H1 (cell line): ENCODE measurements at regions of chr1 and their contacts with region 1.

Region 1: GRCh38 chr1:164673584-164674214 is 114.7 kb downstream of the PBX1 start:
- DNase-seq: peak; percentile 25 to 84
- H3K4me3 ChIP-seq: no peak overlapping the region
- H3K27ac ChIP-seq: no peak overlapping the region
- H3K4me1 ChIP-seq: peaks cover 5 to 20% (median 15%) of the 10 kb centered on the region in 4 experiments; a peak in 5 of 7 replicates
- H3K27me3 ChIP-seq: no peaks in the 10 kb centered on the region
- CTCF ChIP-seq: peak; percentile 74 to 92 (median 91)
- EP300 ChIP-seq: no peak
- POLR2A ChIP-seq: no peak; a peak in 1 of 3 replicates
- RAD21 ChIP-seq: peak; percentile 56 to 65

Region 2: GRCh38 chr1:164625001-164625617 is 48.6 kb before region 1 on chr1:
- CTCF ChIA-PET with region 1: interaction called, 18 read pairs
- POLR2A ChIA-PET with region 1: interaction called, 3 read pairs
- DNase-seq: no peak
- H3K4me3 ChIP-seq: no peak overlapping the region
- H3K27ac ChIP-seq: no peak overlapping the region
- H3K4me1 ChIP-seq: peaks cover 0 to 16% (median 10%) of the 10 kb centered on the region in 4 experiments; a peak in 4 of 7 replicates
- H3K27me3 ChIP-seq: no peaks in the 10 kb centered on the region
- CTCF ChIP-seq: peak in 1 of 3 experiments; percentile 39; a peak in 1 of 4 replicates
- EP300 ChIP-seq: no peak
- POLR2A ChIP-seq: no peak
- RAD21 ChIP-seq: 0 out of 4 replicates have a peak, but pooled peaks of 1 of the 2 experiments have one; percentile 6

Region 3: GRCh38 chr1:164660412-164660772 is 13.3 kb before region 1 on chr1:
- CTCF ChIA-PET with region 1: interaction called, 16 read pairs
- POLR2A ChIA-PET with region 1: interaction called, 3 read pairs
- DNase-seq: no peak
- H3K4me3 ChIP-seq: no peak overlapping the region
- H3K27ac ChIP-seq: no peak overlapping the region
- H3K4me1 ChIP-seq: peaks cover 6 to 17% (median 16%) of the 10 kb centered on the region in 4 experiments; a peak in 6 of 7 replicates
- H3K27me3 ChIP-seq: no peaks in the 10 kb centered on the region
- CTCF ChIP-seq: no peak
- EP300 ChIP-seq: no peak
- POLR2A ChIP-seq: no peak; a peak in 1 of 3 replicates
- RAD21 ChIP-seq: no peak

Region 4: DNA sequence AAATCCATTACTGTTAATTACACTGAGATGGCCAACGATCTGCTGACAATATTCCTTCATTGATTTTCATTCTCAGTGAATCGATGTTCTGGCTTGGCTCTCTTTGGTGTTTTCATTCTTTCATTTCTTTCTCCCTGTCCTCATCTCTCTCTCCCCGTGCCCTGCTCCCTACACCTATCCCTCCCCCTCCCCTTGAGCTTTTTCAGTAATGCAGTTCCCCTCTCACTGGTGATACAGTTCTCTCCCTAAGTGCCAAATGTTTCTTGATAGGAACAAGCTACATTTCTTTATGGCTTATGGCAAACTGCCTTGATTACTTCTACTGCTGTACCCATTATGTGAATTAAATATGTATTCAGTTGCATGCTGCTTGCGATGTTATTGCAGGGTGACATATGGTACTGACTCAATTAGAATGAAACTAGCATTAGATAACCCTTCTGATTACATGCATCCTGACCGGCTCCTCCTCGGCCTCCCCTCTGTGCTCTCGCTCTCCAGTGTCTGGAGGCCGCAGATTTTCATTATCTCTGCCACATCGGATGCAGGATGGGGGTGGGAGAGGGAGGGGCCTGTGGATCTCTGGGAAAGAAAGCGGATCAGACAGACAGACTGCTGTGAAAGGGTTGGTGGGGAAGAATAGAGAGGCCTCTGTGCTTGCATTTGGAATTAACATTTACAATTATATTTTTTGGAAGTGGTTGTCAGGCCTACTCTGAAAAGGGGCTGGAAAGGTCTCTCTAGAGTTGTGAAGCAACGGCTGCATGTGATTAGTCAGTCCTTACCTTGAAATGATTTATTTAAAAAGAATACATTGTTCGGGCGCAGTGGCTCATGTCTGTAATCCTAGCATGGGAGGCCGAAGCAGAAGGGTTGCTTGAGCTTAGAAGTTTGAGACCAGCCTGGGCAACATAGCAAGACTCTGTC is 16.2 kb after region 1 on chr1:
- CTCF ChIA-PET with region 1: interaction called, 37 read pairs
- POLR2A ChIA-PET with region 1: no interaction called
- DNase-seq: no peak
- H3K4me3 ChIP-seq: 0 out of 8 replicates have a peak overlapping the region, but pooled peaks of 1 of the 4 experiments have one; percentile 2
- H3K27ac ChIP-seq: 0 out of 2 replicates have a peak overlapping the region, but pooled peaks have one; percentile 22
- H3K4me1 ChIP-seq: peaks cover 0 to 7% (median 2%) of the 10 kb centered on the region in 4 experiments; a peak in 4 of 7 replicates
- H3K27me3 ChIP-seq: no peaks in the 10 kb centered on the region
- CTCF ChIP-seq: no peak
- EP300 ChIP-seq: no peak
- POLR2A ChIP-seq: no peak
- RAD21 ChIP-seq: no peak

Region 5: DNA sequence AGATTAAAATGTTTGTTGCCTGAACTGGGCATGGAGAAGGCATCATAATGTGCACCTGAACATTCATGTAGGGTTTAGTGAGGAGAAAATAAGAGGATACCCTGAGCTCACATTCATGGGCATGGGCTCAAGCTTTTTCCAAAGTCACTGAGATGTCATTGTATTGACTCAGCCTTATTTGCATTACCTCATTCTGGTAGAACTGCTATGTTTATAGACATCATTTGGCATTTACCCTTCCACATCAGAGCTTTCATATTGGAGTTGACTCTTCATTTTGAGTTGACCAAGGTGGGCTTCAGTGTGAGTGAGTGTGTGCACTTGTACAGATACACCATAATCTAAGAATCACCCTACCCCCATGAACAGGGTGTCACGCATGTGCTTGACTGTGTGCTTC is 28.5 kb after region 1 on chr1:
- CTCF ChIA-PET with region 1: interaction called, 30 read pairs
- POLR2A ChIA-PET with region 1: no interaction called
- DNase-seq: no peak
- H3K4me3 ChIP-seq: no peak overlapping the region
- H3K27ac ChIP-seq: no peak overlapping the region
- H3K4me1 ChIP-seq: peaks cover 0 to 14% (median 11%) of the 10 kb centered on the region in 4 experiments; a peak in 5 of 7 replicates
- H3K27me3 ChIP-seq: no peaks in the 10 kb centered on the region
- CTCF ChIP-seq: no peak
- EP300 ChIP-seq: no peak
- POLR2A ChIP-seq: no peak
- RAD21 ChIP-seq: no peak

Region 6: DNA sequence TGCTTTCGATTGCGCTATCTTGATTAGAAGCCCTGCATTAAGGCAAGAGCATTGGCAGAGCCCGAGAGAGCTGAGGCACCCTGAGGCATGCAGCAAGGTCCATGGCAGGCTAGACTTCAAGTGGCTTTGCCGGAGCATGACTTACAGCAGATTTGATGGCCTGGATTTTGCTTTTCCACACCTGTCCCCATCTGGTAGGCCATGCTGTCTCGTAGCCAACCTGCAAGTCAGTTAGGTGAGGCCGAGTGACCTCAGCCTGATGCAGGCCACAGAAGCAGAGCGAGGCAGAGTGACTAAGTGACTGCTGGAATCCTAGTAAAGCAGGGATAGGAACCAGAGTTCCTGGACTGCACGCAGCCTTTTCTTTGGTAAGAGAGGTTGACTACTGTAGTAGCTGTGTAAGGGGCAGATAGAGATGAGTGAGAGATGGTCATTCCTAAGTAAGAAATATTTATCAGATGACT is 34.2 kb after region 1 on chr1:
- CTCF ChIA-PET with region 1: interaction called, 30 read pairs
- POLR2A ChIA-PET with region 1: interaction called, 3 read pairs
- DNase-seq: no peak
- H3K4me3 ChIP-seq: no peak overlapping the region
- H3K27ac ChIP-seq: peak overlapping the region; percentile 21
- H3K4me1 ChIP-seq: peaks cover 11 to 27% (median 23%) of the 10 kb centered on the region in 4 experiments
- H3K27me3 ChIP-seq: no peaks in the 10 kb centered on the region
- CTCF ChIP-seq: no peak
- EP300 ChIP-seq: no peak
- POLR2A ChIP-seq: no peak
- RAD21 ChIP-seq: no peak

Region 7: DNA sequence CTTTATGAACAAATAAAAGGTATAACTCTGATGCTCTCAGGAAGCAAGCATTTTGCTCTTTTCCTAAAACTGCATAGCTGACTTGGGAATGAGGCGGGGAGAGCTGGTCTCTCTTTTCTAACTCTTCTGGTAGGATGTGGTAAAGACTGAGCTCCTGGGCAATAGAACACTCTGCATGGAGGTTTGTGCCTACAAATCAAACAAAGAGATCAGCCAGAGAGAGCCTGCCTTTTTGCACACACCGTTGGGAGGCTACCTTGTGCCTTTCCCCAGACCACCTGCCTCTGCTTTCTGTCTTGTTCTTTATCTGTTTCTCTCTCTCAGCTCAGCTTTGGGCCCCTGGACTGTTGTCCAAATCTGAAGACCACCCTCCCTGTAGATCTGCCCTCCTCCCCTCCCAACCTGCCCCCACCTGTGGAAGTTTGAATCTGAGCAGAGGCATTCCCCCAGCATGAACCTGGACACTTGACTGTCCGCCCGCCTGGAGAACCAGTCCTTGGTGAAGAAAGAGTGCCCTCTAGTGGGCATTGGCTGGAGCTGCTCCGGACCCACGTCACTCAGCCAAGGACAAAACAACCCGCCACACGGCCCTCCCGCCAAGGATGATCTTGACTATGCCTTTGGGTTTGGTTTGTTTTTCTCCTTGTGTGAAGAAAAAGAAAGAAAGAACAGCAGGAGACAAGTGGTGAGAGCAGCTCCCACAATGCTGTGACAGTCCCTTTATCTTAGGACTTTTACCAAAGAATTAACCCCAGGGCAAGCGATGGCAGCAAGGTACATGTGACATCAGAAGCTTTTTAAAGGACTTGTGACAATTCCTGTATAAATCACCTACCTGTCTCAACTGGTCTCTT is 113.5 kb after region 1 on chr1:
- CTCF ChIA-PET with region 1: interaction called, 56 read pairs
- POLR2A ChIA-PET with region 1: no interaction called
- DNase-seq: peak; percentile 78 to 89
- H3K4me3 ChIP-seq: peak overlapping the region in 1 of 4 experiments; percentile 14; a peak in 1 of 8 replicates
- H3K27ac ChIP-seq: peak overlapping the region; percentile 48; the same call in 1 of the 2 replicates
- H3K4me1 ChIP-seq: peaks cover 0 to 15% (median 5%) of the 10 kb centered on the region in 4 experiments; a peak in 5 of 7 replicates
- H3K27me3 ChIP-seq: no peaks in the 10 kb centered on the region
- CTCF ChIP-seq: peak; percentile 78 to 93 (median 90)
- EP300 ChIP-seq: no peak
- POLR2A ChIP-seq: no peak
- RAD21 ChIP-seq: peak; percentile 93

Region 8: GRCh38 chr1:164858101-164858632 is 184.5 kb after region 1 on chr1:
- CTCF ChIA-PET with region 1: no interaction called
- POLR2A ChIA-PET with region 1: no interaction called
- DNase-seq: no peak
- H3K4me3 ChIP-seq: no peak overlapping the region
- H3K27ac ChIP-seq: no peak overlapping the region
- H3K4me1 ChIP-seq: peaks cover 0 to 4% (median 0%) of the 10 kb centered on the region in 4 experiments; a peak in 1 of 7 replicates
- H3K27me3 ChIP-seq: no peaks in the 10 kb centered on the region; a peak in 1 of 7 replicates
- CTCF ChIP-seq: no peak
- EP300 ChIP-seq: no peak
- POLR2A ChIP-seq: no peak
- RAD21 ChIP-seq: no peak